ENCODE measurements at regions of chr11 and their contacts with region 1.

Region 1: GRCh38 chr11:518463-519250 is 11.6 kb upstream of the RNH1 start:
- DNase-seq: peak; percentile 86
- H3K4me3 Mint-ChIP-seq: peak overlapping the region; percentile 64
- H3K27ac Mint-ChIP-seq: no peak overlapping the region
- H3K4me1 Mint-ChIP-seq: peaks cover 10% of the 10 kb centered on the region
- H3K27me3 Mint-ChIP-seq: no peaks in the 10 kb centered on the region

Region 2: DNA sequence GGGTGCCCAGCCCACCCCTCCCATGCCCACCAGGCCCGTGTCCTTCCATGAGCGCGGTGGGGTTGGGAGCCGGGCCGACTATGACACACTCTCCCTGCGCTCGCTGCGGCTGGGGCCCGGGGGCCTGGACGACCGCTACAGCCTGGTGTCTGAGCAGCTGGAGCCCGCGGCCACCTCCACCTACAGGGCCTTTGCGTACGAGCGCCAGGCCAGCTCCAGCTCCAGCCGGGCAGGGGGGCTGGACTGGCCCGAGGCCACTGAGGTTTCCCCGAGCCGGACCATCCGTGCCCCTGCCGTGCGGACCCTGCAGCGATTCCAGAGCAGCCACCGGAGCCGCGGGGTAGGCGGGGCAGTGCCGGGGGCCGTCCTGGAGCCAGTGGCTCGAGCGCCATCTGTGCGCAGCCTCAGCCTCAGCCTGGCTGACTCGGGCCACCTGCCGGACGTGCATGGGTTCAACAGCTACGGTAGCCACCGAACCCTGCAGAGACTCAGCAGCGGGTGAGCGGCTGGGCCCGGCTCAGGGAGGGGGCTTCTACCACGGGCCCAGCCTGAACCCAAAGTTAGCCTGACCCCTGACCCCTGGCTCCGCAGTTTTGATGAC is 121.6 kb before region 1 on chr11:
- CTCF ChIA-PET with region 1: interaction called, 10 read pairs
- POLR2A ChIA-PET with region 1: no interaction called
- DNase-seq: peak; percentile 57
- H3K4me3 Mint-ChIP-seq: no peak overlapping the region
- H3K27ac Mint-ChIP-seq: no peak overlapping the region
- H3K4me1 Mint-ChIP-seq: peaks cover 5% of the 10 kb centered on the region
- H3K27me3 Mint-ChIP-seq: peaks cover 8% of the 10 kb centered on the region

Region 3: GRCh38 chr11:416757-417621 is 101.7 kb before region 1 on chr11:
- CTCF ChIA-PET with region 1: interaction called, 11 read pairs
- POLR2A ChIA-PET with region 1: no interaction called
- DNase-seq: peak; percentile 52
- H3K4me3 Mint-ChIP-seq: peak overlapping the region; percentile 95
- H3K27ac Mint-ChIP-seq: peak overlapping the region; percentile 94
- H3K4me1 Mint-ChIP-seq: peaks cover 32% of the 10 kb centered on the region
- H3K27me3 Mint-ChIP-seq: no peaks in the 10 kb centered on the region

Region 4: DNA sequence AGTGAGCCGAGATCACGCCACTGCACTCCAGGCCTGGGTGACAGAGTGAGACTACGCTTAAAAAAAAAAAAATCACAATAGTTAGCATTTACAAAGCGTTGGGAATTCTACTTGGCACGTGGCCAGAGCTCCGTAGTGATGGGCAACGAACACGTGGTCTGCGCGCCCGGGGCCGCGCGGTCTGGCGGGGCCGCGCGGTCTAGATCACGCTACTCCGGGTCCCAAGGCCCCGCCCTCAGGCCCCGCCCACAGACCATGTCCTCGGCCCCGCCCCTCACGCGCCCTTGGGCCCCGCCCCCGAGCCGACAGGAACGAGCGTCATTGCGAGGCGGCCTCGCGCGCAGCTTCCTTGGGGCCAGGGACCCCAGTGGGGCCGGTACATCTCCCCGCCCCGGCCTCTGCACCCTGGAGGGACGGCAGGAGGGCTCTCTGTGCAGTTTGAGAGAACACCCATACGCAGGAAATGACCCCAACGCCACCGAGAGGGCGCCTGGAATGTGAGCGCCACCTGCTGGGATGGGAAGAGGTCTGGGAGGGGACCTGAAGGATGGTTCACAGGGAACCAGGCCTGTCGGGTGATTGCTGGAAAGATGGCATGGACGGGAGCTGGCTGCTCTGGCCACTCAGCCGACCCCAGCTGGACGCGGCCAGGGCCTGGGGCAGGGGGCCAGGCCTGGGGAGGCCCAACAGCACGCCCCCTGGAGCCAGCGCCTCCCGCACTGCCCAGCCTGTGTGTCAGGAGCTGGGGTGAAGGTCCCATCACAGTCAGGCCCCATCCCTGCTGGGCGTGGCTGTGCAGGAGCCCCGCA is 70.5 kb before region 1 on chr11:
- CTCF ChIA-PET with region 1: interaction called, 14 read pairs
- POLR2A ChIA-PET with region 1: no interaction called
- DNase-seq: peak; percentile 96
- H3K4me3 Mint-ChIP-seq: peak overlapping the region; percentile 84
- H3K27ac Mint-ChIP-seq: peak overlapping the region; percentile 96
- H3K4me1 Mint-ChIP-seq: peaks cover 25% of the 10 kb centered on the region
- H3K27me3 Mint-ChIP-seq: peaks cover 8% of the 10 kb centered on the region

Region 5: GRCh38 chr11:535519-536454 is 17.1 kb after region 1 on chr11 and contains the start of gene HRAS:
- CTCF ChIA-PET with region 1: interaction called, 36 read pairs
- POLR2A ChIA-PET with region 1: no interaction called
- DNase-seq: peak; percentile 95
- H3K4me3 Mint-ChIP-seq: peak within 1 kb of the TSS; percentile 82
- H3K27ac Mint-ChIP-seq: peak within 1 kb of the TSS; percentile 90
- H3K4me1 Mint-ChIP-seq: peaks cover 21% of the 10 kb centered on the region
- H3K27me3 Mint-ChIP-seq: no peaks in the 10 kb centered on the region
- total RNA-seq, gene HRAS: 51.7 to 63.5 TPM

Measured in activated CD4-positive, alpha-beta T cell treated with anti-CD3 and anti-CD28 coated beads, Interleukin-2, amount 10 ng/mL, durations not matched to agents 7 days and 5 days (primary cell).